ENCODE measurements at regions of chr13 and their contacts with region 1.

Region 1: GRCh38 chr13:23960566-23961156 is 63.4 kb upstream of the C1QTNF9B start:
- DNase-seq: no peak
- CTCF ChIP-seq: peak; percentile 36

Region 2: DNA sequence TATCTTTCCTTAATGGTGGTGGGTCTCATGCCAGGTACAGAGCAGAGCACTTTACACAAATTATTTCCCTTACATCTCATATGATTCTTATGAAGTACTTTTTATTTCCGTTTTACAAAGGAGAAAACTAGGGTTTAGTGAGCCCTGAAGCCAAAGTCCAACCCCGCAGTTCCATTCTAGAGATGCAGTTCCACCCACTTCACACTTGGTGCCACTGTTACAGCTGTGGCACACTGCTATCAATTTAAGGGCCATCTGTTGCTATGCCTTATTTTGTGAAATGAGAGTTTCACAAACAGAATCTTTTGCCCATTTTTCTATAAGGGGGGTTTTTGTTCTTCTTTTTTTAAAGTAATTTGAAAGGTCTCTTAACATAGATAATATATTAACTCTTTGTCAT is 84.4 kb before region 1 on chr13:
- CTCF ChIA-PET with region 1: no interaction called
- POLR2A ChIA-PET with region 1: no interaction called
- DNase-seq: no peak
- CTCF ChIP-seq: peak; percentile 11

Region 3: DNA sequence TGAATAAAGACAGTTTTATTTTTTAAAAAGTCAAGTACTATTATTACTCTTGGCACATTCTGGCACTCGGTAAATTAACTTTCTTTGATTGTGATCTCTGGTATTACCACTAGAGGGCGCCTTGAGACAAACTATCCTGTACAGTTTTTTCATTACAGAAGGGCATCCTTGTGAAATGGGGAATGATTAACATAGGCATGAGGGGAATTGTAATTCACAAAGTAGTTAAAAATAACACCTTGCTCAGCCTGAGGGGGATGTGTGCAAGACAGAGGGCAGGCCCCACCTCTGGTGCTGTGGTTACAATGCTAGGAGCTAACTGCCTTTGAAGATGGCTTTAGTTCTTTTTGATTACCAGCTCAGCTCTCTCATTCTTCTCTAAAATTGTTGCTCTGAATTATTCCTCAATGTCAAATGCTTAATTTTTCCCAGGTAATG is 39.2 kb before region 1 on chr13:
- CTCF ChIA-PET with region 1: interaction called, 40 read pairs
- POLR2A ChIA-PET with region 1: no interaction called
- DNase-seq: no peak
- CTCF ChIP-seq: peak; percentile 52

Region 4: GRCh38 chr13:24038841-24039330 is 78.2 kb after region 1 on chr13:
- CTCF ChIA-PET with region 1: no interaction called
- POLR2A ChIA-PET with region 1: no interaction called
- DNase-seq: no peak
- CTCF ChIP-seq: no peak